Left cardiac atrium (tissue), 4 donors: ENCODE measurements at regions of chr1 and their contacts with region 1.

Region 1: GRCh38 chr1:205913451-205914155 is 29.7 kb downstream of the SLC26A9 start:
- DNase-seq: peak; percentile 84
- ATAC-seq: peak; percentile 71 to 79

Region 2: GRCh38 chr1:205791568-205792180 is 121.9 kb before region 1 on chr1:
- intact Hi-C with region 1: loop called (anchors 5 kb)
- DNase-seq: peak; percentile 63
- ATAC-seq: peak; percentile 85 to 87

Region 3: GRCh38 chr1:205812878-205813754 is 100.5 kb before region 1 on chr1 and contains the start of gene SLC41A1:
- intact Hi-C with region 1: loop called in 1 of 2 experiments (anchors 5 kb)
- DNase-seq: peak; percentile 93
- ATAC-seq: peak; percentile 95 to 96
- total RNA-seq, gene SLC41A1: 162 to 206 TPM

Region 4: DNA sequence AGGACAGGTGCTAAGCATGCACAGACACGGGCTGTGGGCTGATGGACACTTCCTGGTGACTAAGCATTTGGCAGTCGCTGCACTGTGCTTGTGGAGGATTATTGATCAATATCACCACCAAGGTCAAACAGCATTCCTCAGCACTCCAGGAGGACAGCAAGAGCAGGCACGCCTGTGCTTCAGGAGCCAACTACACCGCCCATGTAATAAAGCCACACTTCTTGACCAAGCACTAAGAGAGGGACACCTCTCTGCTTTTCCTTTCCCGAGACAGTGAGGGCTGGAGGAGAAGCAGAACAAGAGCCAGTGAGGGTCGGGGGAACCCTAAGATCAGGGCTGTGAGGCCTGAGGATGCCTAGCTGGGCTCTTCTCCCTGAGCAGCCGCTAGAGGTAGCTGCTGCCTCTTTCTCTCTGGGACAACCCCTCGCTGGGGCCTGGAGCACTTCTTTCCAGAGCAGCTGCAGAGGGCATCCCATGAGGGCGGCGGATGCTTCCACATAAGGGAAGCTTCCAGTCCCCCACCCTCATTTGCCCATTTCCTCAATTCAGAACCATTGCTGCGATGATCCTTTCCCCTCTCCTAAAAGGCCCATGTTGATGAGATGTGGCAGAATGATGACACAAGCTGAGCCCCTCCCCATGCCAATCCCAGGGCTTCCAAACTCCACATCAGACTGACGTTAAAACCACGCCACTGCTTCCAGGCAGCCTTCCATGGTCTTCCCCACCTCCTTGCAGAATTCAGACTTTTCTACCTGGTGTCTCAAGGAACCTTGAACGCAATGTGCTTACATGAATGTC is 70.5 kb after region 1 on chr1:
- intact Hi-C with region 1: no loop called
- DNase-seq: peak; percentile 77
- ATAC-seq: peak; percentile 80 to 82